Left colon (tissue), 2 donors: ENCODE measurements at regions of chr4 and their contacts with region 1.

Region 1: DNA sequence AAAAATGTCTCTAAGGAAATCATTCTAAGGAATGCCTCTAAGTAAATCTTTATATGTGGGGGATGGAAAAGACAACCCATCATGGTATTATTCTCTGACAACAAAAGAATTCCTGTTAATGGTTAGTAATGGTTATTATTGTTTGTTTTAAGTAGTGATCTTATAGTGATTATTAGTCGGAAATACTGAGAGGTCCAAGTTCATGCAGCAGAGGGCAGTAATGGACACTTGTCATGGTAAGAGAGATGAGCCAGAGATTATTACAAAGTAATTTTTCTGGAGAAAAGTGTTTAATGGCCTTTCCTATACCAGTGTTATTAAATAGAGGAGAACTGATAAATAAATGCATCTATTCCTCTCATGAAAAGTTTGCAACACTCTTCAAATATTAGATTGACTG is 8.1 kb upstream of the DKK2 start:
- DNase-seq: no peak
- ATAC-seq: no peak

Region 2: DNA sequence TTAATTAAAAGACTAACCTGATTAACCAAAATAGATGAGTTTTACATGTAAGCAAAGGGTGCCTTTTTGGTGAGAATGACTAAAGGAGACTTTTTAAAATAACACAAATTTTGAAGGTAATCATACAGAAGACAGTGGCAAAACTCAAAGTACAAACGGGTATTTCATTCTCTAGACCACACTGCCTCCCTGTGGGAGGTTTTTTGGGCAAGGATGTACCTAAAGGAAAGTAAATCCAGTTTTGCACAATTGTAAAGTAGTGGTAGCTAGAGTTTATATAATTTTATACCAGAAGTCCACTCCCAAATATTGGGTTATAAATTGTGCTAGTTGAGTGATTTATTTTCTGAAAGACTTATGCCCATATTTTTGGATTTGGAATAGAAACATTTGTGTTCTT is 474.9 kb after region 1 on chr4:
- intact Hi-C with region 1: loop called in 1 of 2 experiments (anchors 10 kb)
- DNase-seq: peak in 1 of 2 donors; percentile 11
- ATAC-seq: no peak